HepG2 (cell line): ENCODE measurements at regions of chr16 and their contacts with region 1.

Region 1: GRCh38 chr16:53435066-53435688 is 906 bp downstream of the RBL2 start:
- DNase-seq: peak; percentile 94
- ATAC-seq: peak; percentile 93
- H3K4me3 ChIP-seq: peak overlapping the region; percentile 93 to 98 (median 94)
- H3K27ac ChIP-seq: peak overlapping the region; percentile 81
- H3K4me1 ChIP-seq: peaks cover 33% of the 10 kb centered on the region
- H3K27me3 ChIP-seq: no peaks in the 10 kb centered on the region; a peak in 1 of 5 replicates
- CTCF ChIP-seq: no peak
- EP300 ChIP-seq: no peak
- POLR2A ChIP-seq: peak; percentile 79
- RAD21 ChIP-seq: peak; percentile 14; the same call in 1 of the 2 replicates

Region 2: DNA sequence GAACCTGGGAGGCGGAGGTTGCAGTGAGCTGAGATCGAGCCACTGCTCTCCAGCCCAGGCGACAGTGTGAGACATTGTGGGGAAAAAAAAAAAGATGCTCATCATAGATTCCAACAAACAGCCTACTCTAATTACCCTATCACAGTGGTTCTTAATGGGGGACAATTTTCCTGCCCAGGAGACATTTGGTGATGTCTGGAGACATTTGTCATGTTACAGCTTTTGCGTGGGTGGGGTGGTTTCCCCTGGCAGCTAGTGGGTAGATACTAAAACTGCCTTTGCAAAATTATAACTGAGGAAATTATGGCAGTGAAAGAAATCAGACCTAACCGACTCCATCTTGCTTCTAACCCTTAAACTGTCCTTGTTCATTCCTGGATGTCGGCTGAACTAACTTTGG is 93.4 kb before region 1 on chr16:
- CTCF ChIA-PET with region 1: no interaction called
- POLR2A ChIA-PET with region 1: no interaction called
- in situ Hi-C with region 1: no loop called
- intact Hi-C with region 1: no loop called
- DNase-seq: no peak
- ATAC-seq: no peak
- H3K4me3 ChIP-seq: no peak overlapping the region
- H3K27ac ChIP-seq: no peak overlapping the region
- H3K4me1 ChIP-seq: no peaks in the 10 kb centered on the region
- H3K27me3 ChIP-seq: peaks cover 0 to 12% of the 10 kb centered on the region in 2 experiments; a peak in 1 of 5 replicates
- CTCF ChIP-seq: no peak
- EP300 ChIP-seq: no peak
- POLR2A ChIP-seq: no peak
- RAD21 ChIP-seq: no peak

Region 3: GRCh38 chr16:53356478-53357200 is 78.5 kb before region 1 on chr16:
- CTCF ChIA-PET with region 1: no interaction called
- POLR2A ChIA-PET with region 1: no interaction called
- in situ Hi-C with region 1: no loop called
- intact Hi-C with region 1: no loop called
- DNase-seq: no peak
- ATAC-seq: no peak
- H3K4me3 ChIP-seq: no peak overlapping the region
- H3K27ac ChIP-seq: no peak overlapping the region
- H3K4me1 ChIP-seq: no peaks in the 10 kb centered on the region
- H3K27me3 ChIP-seq: peaks cover 10 to 37% of the 10 kb centered on the region in 2 experiments; a peak in 2 of 5 replicates
- CTCF ChIP-seq: peak; percentile 27; the same call in 1 of the 2 replicates
- EP300 ChIP-seq: no peak
- POLR2A ChIP-seq: no peak
- RAD21 ChIP-seq: no peak

Region 4: GRCh38 chr16:53445534-53445933 is 10.4 kb after region 1 on chr16:
- CTCF ChIA-PET with region 1: no interaction called
- POLR2A ChIA-PET with region 1: interaction called, 12 read pairs
- in situ Hi-C with region 1: no loop called
- intact Hi-C with region 1: no loop called
- DNase-seq: no peak
- ATAC-seq: no peak
- H3K4me3 ChIP-seq: no peak overlapping the region
- H3K27ac ChIP-seq: no peak overlapping the region
- H3K4me1 ChIP-seq: no peaks in the 10 kb centered on the region
- H3K27me3 ChIP-seq: no peaks in the 10 kb centered on the region
- CTCF ChIP-seq: no peak
- EP300 ChIP-seq: no peak
- POLR2A ChIP-seq: no peak
- RAD21 ChIP-seq: no peak

Region 5: DNA sequence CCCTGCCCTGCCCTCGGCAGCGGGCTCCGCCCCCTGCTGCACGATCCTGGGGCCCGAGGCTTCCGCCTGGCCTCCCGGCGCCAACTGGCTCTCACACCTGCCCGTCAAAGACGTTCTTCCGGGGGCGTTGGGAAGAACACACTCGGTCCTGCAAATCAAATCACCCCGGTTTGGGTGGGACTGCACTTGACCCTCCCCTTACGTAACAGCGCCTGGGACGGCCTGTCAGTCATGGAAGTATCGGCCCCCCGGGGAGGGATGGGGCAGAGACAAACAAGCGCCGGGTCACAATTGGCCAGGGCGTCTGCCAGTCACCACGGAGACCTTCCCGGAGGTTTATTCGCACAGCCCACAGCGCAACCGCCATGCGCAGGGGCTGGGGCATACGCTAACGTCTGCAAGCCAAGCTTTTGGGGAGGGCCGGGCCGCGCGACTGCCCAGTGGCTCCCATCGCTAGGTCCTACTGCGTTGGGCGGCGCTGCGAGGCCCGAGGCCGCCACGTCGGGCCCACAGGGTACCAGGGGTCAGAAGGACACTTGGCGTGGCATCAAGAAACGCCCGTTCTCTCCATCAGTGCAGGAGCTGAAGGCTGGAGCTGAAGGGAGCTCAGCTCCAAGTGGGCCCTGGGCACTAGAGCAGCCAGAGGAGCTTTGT is 68.2 kb after region 1 on chr16:
- CTCF ChIA-PET with region 1: no interaction called
- POLR2A ChIA-PET with region 1: interaction called, 20 read pairs
- in situ Hi-C with region 1: no loop called
- intact Hi-C with region 1: loop called (anchors 1 kb)
- DNase-seq: peak; percentile 100
- ATAC-seq: peak; percentile 93
- H3K4me3 ChIP-seq: peak overlapping the region; percentile 73 to 94 (median 92)
- H3K27ac ChIP-seq: peak overlapping the region; percentile 71
- H3K4me1 ChIP-seq: peaks cover 26% of the 10 kb centered on the region
- H3K27me3 ChIP-seq: no peaks in the 10 kb centered on the region; a peak in 1 of 5 replicates
- CTCF ChIP-seq: peak; percentile 46
- EP300 ChIP-seq: peak; percentile 40 to 52; a peak in 2 of 4 replicates
- POLR2A ChIP-seq: peak; percentile 86 to 96
- RAD21 ChIP-seq: no peak